ENCODE measurements at regions of chr2 and their contacts with region 1.

Region 1: DNA sequence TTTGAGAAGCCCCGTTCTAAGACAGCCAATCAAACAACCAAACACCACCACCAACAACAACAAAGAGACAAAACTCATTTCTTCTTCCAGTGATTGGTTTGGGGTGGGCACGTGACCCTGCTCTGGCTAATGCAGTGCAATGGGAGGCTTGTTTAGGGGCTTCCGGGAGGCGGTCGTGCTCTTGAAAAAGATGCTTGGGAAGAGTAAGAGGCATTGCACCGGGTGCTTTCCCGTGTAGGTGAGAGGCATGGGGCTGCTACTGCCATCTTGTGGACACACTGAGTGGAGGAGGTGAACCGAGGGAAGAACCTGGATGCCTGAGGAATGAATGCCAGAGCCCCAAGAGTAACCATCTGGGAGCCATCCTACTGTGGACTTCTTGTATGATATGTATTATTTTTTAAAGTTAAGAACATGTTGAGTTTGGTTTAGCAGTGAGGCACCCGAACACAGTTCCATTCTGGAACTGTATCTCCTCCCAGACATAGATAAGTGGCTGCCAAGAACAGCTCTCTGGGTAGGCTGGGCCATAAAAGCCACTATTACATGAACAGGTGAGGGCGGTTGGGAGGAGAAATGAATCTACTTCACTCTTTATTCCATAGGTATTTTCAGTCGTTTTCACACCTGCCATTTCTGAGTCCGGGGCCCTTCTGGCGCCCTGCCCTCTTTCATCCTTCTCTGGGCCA is 19.1 kb upstream of the ARHGAP25 start:
- DNase-seq: peak; percentile 38
- H3K4me3 Mint-ChIP-seq: no peak overlapping the region
- H3K27ac Mint-ChIP-seq: peak overlapping the region; percentile 84
- H3K4me1 Mint-ChIP-seq: peaks cover 81% of the 10 kb centered on the region
- H3K27me3 Mint-ChIP-seq: no peaks in the 10 kb centered on the region

Region 2: DNA sequence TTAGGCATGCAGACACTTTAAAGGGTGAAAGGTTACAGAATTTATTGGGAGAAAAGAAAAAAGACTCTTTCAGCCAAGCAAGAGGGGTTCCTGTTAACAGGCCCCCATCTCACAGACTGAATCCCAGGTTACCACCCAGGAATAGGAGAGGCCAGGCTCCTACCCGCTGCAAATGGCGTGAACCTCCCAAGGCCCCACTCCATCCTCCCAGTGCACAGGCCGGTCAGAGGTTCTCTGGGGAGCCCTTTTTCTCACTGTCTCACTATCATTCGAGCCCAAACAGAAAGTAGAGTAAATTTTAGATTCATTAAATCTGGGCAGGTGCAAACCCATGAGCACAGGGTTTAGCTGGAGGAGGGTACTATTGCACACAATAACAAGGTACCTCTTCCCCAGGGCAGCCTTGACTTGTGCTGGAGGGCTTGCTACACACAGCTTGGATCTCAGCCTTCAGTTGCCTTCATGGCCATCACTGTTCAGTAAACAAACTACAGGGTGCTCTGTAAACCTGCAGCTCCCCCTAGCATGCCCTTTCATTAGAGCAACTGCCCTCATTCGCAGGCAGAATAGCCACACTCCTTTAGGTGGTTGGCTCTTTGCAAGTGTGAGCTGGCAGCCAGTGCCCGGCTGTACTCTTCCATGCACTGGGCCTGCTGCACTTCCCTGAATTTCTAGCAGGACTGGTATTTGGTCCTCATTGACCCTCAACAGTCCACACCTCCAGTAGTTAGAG is 357.7 kb before region 1 on chr2:
- CTCF ChIA-PET with region 1: no interaction called
- DNase-seq: no peak
- H3K4me3 Mint-ChIP-seq: no peak overlapping the region
- H3K27ac Mint-ChIP-seq: no peak overlapping the region
- H3K4me1 Mint-ChIP-seq: peaks cover 6% of the 10 kb centered on the region
- H3K27me3 Mint-ChIP-seq: peaks cover 7% of the 10 kb centered on the region

Region 3: DNA sequence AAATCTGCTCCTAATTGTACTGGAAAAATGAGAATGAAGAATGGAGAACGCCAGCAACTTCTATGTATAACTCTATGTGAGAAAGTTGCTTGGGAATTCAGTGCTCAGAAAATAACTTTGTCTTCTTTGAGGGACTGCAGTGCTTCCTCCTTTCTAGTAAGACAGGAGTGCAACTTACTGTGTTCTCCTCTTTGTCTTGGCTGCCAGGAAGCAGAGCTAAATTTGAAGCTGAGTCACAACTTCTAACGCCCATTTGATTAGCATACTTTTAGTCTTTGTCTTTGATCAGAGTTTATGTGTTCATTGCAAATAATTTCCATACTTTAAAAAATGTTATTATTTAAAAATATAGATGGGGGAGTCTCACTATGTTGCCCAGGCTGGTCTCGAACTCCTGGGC is 25.7 kb after region 1 on chr2:
- CTCF ChIA-PET with region 1: interaction called, 26 read pairs
- DNase-seq: no peak
- H3K4me3 Mint-ChIP-seq: no peak overlapping the region
- H3K27ac Mint-ChIP-seq: peak overlapping the region; percentile 77
- H3K4me1 Mint-ChIP-seq: peaks cover 88% of the 10 kb centered on the region
- H3K27me3 Mint-ChIP-seq: no peaks in the 10 kb centered on the region

Region 4: DNA sequence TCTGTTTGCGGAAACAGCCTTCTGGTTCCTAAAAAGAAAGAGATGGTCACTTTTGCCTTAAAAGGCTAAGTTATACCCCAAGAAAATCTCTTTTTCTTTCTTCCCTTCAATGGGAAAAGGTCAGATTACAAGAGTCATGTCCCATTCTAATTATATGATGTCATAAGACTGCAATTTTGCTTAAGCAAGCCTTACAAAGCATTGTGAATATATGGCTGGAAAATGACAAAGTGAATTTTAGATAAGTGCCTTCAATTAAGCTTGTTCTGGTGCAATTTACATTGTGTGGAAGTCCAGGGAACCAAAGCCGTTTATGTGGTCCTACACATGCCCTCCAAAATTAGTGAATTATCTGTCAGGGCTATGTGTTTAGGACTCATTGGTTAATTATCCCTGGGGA is 163.3 kb after region 1 on chr2:
- CTCF ChIA-PET with region 1: no interaction called
- DNase-seq: no peak
- H3K4me3 Mint-ChIP-seq: no peak overlapping the region
- H3K27ac Mint-ChIP-seq: no peak overlapping the region
- H3K4me1 Mint-ChIP-seq: no peaks in the 10 kb centered on the region
- H3K27me3 Mint-ChIP-seq: peaks cover 25% of the 10 kb centered on the region

Measured in activated naive CD4-positive, alpha-beta T cell treated with anti-CD3 and anti-CD28 coated beads, Interleukin-2, amount 10 ng/mL, durations not matched to agents 7 days and 5 days (primary cell).